ENCODE measurements at regions of chr9 and their contacts with region 1.

Region 1: DNA sequence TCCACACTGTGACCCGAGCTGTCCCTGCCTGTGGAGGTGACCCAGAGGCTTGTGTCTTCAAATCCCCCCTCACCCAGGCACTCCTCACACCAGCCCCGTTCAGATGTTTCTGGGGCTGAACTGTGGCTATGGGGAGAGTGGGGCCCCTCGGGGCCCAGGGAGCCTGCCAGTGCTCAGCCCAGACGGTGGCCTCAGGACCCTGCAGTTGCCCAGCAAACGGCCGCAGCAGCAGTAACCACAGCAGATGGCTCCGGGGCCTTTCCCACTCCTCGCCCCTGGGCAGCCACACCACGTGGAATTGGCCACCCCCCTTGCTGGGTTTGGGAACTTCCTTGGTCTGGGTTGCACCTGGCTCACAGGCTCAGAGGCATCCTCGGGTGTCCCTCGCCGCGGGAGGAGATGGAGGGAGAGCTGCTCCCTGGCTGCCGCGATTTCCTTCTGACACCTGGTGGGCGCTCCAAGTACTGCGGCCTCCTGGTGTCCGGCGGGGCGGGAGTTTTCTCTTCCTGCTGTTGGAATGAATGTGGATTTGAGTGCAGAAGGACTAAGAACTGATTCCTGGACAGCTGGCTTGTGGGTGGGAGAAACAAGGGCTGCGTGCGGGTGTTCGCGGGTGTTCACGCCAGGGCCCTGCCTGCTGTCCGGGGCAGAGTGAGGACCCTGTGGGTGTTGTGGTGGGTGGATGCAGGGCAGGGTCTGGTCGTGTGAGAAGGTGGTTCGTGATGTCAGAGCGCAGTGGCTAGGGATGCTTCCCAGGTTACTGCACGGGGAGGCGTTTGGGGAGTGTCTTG is 97.5 kb downstream of the COL5A1 start:
- DNase-seq: peak; percentile 79
- H3K4me3 ChIP-seq: no peak overlapping the region
- H3K27ac ChIP-seq: peak overlapping the region; percentile 42
- H3K4me1 ChIP-seq: peaks cover 41% of the 10 kb centered on the region
- H3K27me3 ChIP-seq: no peaks in the 10 kb centered on the region
- CTCF ChIP-seq: peak; percentile 94

Region 2: DNA sequence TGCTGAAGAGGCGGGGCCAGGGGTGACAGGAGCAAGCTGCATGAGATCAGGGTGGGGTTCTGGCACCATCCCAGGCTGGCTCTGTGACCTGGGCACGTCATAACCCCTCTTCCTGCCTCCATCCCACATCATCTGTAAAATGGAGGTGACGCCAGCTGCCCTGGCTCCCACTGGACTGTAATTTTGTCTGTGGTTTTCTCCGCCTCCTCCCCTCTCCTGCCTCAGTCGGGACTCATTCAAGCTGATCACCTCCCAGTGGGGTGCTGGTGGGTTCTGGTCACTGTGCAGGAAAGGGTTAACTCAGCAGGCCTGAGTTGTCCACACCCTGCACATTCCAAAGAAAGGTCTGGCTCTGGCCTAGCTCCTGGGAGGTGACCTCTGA is 284.6 kb before region 1 on chr9:
- intact Hi-C with region 1: loop called (anchors 5 kb)
- DNase-seq: no peak
- H3K4me3 ChIP-seq: no peak overlapping the region
- H3K27ac ChIP-seq: no peak overlapping the region
- H3K4me1 ChIP-seq: peaks cover 31% of the 10 kb centered on the region
- H3K27me3 ChIP-seq: no peaks in the 10 kb centered on the region
- CTCF ChIP-seq: no peak